Activated CD8-positive, alpha-beta T cell treated with anti-CD3 and anti-CD28 coated beads, Interleukin-2, amount 10 ng/mL, durations not matched to agents 7 days and 5 days (primary cell): ENCODE measurements at regions of chr2 and their contacts with region 1.

Region 1: DNA sequence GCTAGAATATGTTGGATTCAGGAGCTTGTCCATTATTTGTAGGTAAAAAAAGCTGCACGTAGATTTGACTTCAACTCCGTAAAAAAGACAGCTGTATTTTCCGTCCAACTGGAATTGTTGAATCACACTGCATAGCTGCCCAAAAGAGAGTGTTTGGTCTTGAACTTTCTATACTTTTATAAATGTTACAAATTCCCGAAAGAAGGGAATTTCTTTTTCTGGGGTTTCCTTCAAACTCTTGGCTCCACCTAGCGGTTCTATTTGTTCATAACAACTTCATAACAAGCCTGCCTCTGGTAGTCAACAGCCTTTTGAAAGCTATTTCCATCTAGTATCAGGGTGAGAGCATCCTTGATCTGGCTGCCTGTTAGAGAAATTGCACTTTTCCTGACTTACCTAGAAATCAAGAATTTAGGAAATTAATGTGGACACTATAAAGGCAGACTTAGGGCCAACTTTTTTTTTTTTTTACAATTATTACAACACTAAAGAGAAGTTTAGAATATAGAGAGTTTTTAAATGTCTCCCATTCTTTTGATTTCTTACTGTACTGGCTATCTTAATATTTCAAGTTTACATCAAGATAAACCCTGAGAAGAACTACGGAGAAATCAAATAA is 48.1 kb downstream of the TMEM185B start:
- DNase-seq: peak; percentile 46
- ATAC-seq: no peak
- H3K4me3 Mint-ChIP-seq: no peak overlapping the region
- H3K27ac Mint-ChIP-seq: peak overlapping the region; percentile 64
- H3K4me1 Mint-ChIP-seq: peaks cover 51% of the 10 kb centered on the region
- H3K27me3 Mint-ChIP-seq: no peaks in the 10 kb centered on the region

Region 2: DNA sequence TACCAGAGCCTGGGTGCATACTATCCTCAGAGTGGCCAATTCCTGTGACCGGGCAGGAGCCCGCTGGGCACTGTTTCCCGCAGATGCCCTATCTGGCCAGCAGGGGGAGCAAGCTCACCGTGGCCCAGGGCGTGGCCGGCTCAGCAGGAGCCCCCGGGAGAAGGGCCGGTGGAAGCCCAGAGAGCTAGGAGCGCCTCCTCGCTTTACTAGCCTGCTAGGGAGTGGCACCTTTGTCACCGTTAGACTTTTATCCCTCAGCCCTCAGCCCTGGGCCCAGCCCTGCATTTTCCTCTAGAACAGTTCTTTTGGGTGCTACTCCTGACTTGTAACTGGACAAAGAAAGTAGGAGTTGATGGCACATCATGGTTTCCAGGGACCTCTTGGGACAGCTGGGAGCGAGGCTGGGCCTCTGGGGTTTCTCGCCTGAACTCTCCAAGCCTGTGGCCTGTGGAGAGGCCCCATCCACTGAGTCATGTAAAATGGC is 472.1 kb before region 1 on chr2:
- CTCF ChIA-PET with region 1: interaction called, 74 read pairs
- POLR2A ChIA-PET with region 1: interaction called, 3 read pairs
- DNase-seq: peak; percentile 76
- ATAC-seq: peak; percentile 94
- H3K4me3 Mint-ChIP-seq: no peak overlapping the region
- H3K27ac Mint-ChIP-seq: no peak overlapping the region
- H3K4me1 Mint-ChIP-seq: peaks cover 17% of the 10 kb centered on the region
- H3K27me3 Mint-ChIP-seq: peaks cover 4% of the 10 kb centered on the region

Region 3: GRCh38 chr2:119826370-119826961 is 348.6 kb before region 1 on chr2:
- CTCF ChIA-PET with region 1: interaction called, 14 read pairs
- POLR2A ChIA-PET with region 1: no interaction called
- DNase-seq: peak; percentile 57
- ATAC-seq: peak; percentile 76
- H3K4me3 Mint-ChIP-seq: no peak overlapping the region
- H3K27ac Mint-ChIP-seq: no peak overlapping the region
- H3K4me1 Mint-ChIP-seq: peaks cover 28% of the 10 kb centered on the region
- H3K27me3 Mint-ChIP-seq: no peaks in the 10 kb centered on the region

Region 4: GRCh38 chr2:119996148-119996547 is 178.9 kb before region 1 on chr2:
- CTCF ChIA-PET with region 1: no interaction called
- POLR2A ChIA-PET with region 1: no interaction called
- DNase-seq: no peak
- ATAC-seq: no peak
- H3K4me3 Mint-ChIP-seq: no peak overlapping the region
- H3K27ac Mint-ChIP-seq: no peak overlapping the region
- H3K4me1 Mint-ChIP-seq: no peaks in the 10 kb centered on the region
- H3K27me3 Mint-ChIP-seq: peaks cover 2% of the 10 kb centered on the region

Region 5: GRCh38 chr2:120012771-120013596 is 162.1 kb before region 1 on chr2 and contains the start of gene EPB41L5:
- CTCF ChIA-PET with region 1: interaction called, 19 read pairs
- POLR2A ChIA-PET with region 1: interaction called, 7 read pairs
- DNase-seq: peak; percentile 91
- ATAC-seq: peak; percentile 97
- H3K4me3 Mint-ChIP-seq: peak within 1 kb of the TSS; percentile 76
- H3K27ac Mint-ChIP-seq: no peak within 1 kb of the TSS
- H3K4me1 Mint-ChIP-seq: peaks cover 13% of the 10 kb centered on the region
- H3K27me3 Mint-ChIP-seq: peaks cover 3% of the 10 kb centered on the region
- total RNA-seq, gene EPB41L5: 3.8 to 5.6 TPM

Region 6: DNA sequence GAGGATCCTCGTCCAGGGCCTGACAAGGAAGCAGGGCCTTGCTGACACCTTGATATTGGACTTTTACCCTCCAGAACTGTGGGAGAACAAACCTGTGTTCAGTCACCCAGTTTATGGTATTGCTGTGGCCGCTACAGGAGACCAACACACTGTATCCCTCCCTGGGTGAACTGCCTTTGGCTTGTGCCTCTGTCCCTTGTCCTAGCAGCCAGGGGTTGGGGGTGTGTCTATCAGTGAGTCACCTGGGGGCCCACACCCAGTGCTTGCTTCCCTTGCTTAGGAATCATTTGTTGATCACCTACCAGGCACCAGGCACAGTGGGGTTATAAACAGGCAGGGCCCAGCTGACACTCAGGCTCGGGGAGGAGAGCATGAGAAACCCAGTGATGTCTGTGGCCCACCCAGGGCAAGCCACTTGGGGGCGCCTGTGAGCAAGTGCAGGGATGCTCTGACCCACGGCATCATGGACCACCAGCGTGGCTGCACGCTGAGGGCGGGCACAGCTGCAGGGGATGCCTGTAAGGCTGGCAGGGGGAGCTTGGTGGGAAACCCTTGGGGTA is 31.0 kb after region 1 on chr2:
- CTCF ChIA-PET with region 1: interaction called, 10 read pairs
- POLR2A ChIA-PET with region 1: no interaction called
- DNase-seq: peak; percentile 59
- ATAC-seq: peak; percentile 40
- H3K4me3 Mint-ChIP-seq: no peak overlapping the region
- H3K27ac Mint-ChIP-seq: no peak overlapping the region
- H3K4me1 Mint-ChIP-seq: peaks cover 11% of the 10 kb centered on the region
- H3K27me3 Mint-ChIP-seq: no peaks in the 10 kb centered on the region

Region 7: DNA sequence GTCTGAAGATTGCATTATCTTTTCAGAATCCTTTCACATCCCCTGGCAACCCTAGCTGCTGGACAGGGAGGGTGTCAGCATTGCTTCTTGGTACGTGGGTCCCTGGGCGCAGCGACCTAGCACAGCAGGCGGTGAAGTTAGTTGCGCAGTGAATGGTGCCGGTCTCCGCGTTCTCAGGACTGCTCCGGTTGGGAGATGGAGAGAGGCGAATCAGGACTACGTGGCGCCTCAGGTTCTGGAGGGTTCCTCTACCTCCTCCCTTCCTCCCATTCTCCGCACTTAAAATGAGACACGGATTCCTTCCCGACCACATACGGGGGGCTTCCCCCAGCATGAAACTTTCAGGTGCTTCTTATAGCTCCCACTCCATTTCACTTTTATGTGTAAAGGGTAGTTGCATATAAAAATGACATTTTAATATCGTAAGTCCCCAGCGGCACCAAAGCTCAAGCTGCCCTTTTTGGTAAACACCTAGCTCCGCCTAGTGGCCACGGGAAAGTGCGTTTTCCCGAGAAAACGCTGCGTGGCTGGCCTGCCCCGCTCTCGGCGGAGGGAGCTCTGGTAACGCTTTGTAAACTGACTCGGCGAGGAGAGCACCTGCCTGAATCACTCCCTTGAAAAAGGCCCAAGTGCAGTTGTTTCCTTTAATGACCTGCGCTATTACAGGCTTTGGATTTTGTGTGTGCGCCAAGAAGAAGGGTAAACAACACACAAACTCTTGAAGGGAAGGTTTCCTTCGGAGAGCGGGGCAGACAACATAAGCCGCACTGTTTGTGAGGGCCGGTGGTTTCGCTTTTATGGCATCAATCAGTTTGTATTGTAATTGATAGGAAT is 138.0 kb after region 1 on chr2:
- CTCF ChIA-PET with region 1: interaction called, 96 read pairs
- POLR2A ChIA-PET with region 1: interaction called, 8 read pairs
- DNase-seq: peak; percentile 85
- ATAC-seq: peak; percentile 78
- H3K4me3 Mint-ChIP-seq: peak overlapping the region; percentile 68
- H3K27ac Mint-ChIP-seq: peak overlapping the region; percentile 68
- H3K4me1 Mint-ChIP-seq: peaks cover 51% of the 10 kb centered on the region
- H3K27me3 Mint-ChIP-seq: no peaks in the 10 kb centered on the region